ENCODE measurements at regions of chr19 and their contacts with region 1.

Region 1: GRCh38 chr19:38793671-38794070 is 4.7 kb downstream of the LGALS7B start:
- DNase-seq: no peak
- H3K4me3 ChIP-seq: no peak overlapping the region
- H3K4me3 Mint-ChIP-seq: peak overlapping the region in 5 of 7 donors; percentile 39 to 92 (median 69)
- H3K27ac ChIP-seq: no peak overlapping the region
- H3K27ac Mint-ChIP-seq: peak overlapping the region in 1 of 8 donors; percentile 80
- H3K4me1 ChIP-seq: no peaks in the 10 kb centered on the region
- H3K4me1 Mint-ChIP-seq: peaks cover 4 to 9% (median 6%) of the 10 kb centered on the region in 3 donors
- H3K27me3 ChIP-seq: no peaks in the 10 kb centered on the region
- H3K27me3 Mint-ChIP-seq: no peaks in the 10 kb centered on the region

Region 2: GRCh38 chr19:38478273-38478967 is 315.3 kb before region 1 on chr19:
- CTCF ChIA-PET with region 1: no interaction called
- POLR2A ChIA-PET with region 1: interaction called, 11 read pairs
- DNase-seq: no peak
- H3K4me3 ChIP-seq: no peak overlapping the region
- H3K4me3 Mint-ChIP-seq: no peak overlapping the region
- H3K27ac ChIP-seq: no peak overlapping the region
- H3K27ac Mint-ChIP-seq: peak overlapping the region in 1 of 8 donors; percentile 37
- H3K4me1 ChIP-seq: no peaks in the 10 kb centered on the region
- H3K4me1 Mint-ChIP-seq: no peaks in the 10 kb centered on the region
- H3K27me3 ChIP-seq: no peaks in the 10 kb centered on the region
- H3K27me3 Mint-ChIP-seq: peaks cover 6 to 10% of the 10 kb centered on the region in 2 donors